ENCODE measurements at regions of chr5 and their contacts with region 1.

Region 1: GRCh38 chr5:138360941-138361452 is 8.5 kb downstream of the KDM3B start:
- DNase-seq: no peak
- H3K4me3 ChIP-seq: no peak overlapping the region
- H3K27ac ChIP-seq: no peak overlapping the region
- H3K4me1 ChIP-seq: peaks cover 23% of the 10 kb centered on the region
- H3K27me3 ChIP-seq: no peaks in the 10 kb centered on the region
- CTCF ChIP-seq: no peak
- POLR2A ChIP-seq: no peak

Region 2: GRCh38 chr5:138331449-138332368 is 29.3 kb before region 1 on chr5 and contains the start of gene CDC25C:
- intact Hi-C with region 1: no loop called
- DNase-seq: peak in 1 of 2 donors; percentile 98
- H3K4me3 ChIP-seq: peak within 1 kb of the TSS; percentile 45 to 53
- H3K27ac ChIP-seq: no peak within 1 kb of the TSS
- H3K4me1 ChIP-seq: peaks cover 19% of the 10 kb centered on the region
- H3K27me3 ChIP-seq: no peaks in the 10 kb centered on the region
- CTCF ChIP-seq: no peak
- POLR2A ChIP-seq: no peak
- total RNA-seq, gene CDC25C: 2.0 TPM

Region 3: DNA sequence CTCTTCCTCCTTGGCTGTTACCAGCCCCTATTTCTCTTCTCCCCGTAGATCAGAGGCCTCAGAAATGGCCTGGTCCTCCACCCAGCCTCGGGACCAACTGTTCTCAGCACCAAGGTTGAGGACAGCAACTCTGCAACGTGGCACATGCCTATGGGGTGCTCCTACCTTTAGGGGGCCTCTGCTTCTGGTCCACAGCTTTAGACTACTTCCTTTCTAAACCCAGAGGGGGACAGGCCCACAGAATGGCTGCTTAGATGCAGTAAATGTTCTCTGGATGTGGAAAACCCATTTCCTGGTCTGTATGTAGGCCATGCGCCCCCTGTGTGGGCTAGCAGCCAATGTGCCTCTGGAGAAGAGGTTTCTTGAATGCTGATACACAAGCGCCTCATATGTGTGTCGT is 1613.7 kb after region 1 on chr5:
- intact Hi-C with region 1: loop called (anchors 5 kb)
- DNase-seq: peak in 1 of 2 donors; percentile 62
- H3K4me3 ChIP-seq: no peak overlapping the region
- H3K27ac ChIP-seq: no peak overlapping the region
- H3K4me1 ChIP-seq: no peaks in the 10 kb centered on the region
- H3K27me3 ChIP-seq: no peaks in the 10 kb centered on the region
- CTCF ChIP-seq: no peak
- POLR2A ChIP-seq: no peak

Measured in vagina (tissue), 2 donors.